Activated B cell treated with CpG ODN at 0.5 μM for 24 hours (primary cell): ENCODE measurements at regions of chrX and their contacts with region 1.

Region 1: DNA sequence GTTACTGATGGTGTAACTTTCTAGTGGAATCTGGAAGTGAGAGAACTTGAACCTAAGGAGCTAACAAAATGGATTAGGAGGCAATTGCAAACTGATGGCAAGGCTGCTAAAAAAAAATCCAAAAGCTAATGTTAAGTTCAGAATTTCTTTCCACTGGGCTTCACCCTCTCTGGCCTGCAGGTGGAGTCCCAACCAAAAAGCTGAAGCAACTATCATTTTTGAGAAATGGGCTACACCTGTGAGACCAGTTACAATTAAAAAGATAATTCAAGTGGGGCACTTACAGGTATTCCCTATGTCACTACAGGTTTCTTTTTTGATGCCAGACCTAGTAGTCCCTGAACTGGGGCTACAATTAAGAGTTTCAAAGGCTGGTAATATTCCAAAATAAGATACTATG is 142.1 kb upstream of the FTHL17 start:
- DNase-seq: no peak
- ATAC-seq: peak; percentile 52
- H3K4me3 Mint-ChIP-seq: no peak overlapping the region
- H3K27ac Mint-ChIP-seq: no peak overlapping the region
- H3K4me1 Mint-ChIP-seq: peaks cover 8% of the 10 kb centered on the region
- H3K27me3 Mint-ChIP-seq: no peaks in the 10 kb centered on the region
- CTCF ChIP-seq: no peak

Region 2: DNA sequence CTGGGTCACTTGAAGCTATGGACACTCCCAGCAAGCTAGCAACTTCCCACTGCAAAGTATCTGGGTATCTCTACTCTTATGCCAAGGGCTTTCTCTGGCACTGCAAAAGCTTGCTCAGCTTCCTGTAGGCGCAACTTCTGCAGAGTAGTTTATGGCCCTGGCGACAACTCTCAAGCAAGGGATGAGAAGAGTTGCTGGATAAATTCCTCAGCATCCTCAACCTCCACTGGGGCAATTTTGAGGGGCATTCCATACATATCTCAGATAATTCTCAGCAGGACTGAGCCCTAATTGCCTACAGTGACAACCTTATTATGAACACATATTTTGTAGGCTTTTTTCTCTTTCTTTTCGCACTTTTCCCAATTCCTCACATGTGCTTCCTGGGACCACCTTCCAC is 293.7 kb before region 1 on chrX:
- CTCF ChIA-PET with region 1: no interaction called
- POLR2A ChIA-PET with region 1: no interaction called
- intact Hi-C with region 1: no loop called
- DNase-seq: no peak
- ATAC-seq: no peak
- H3K4me3 Mint-ChIP-seq: no peak overlapping the region
- H3K27ac Mint-ChIP-seq: no peak overlapping the region
- H3K4me1 Mint-ChIP-seq: no peaks in the 10 kb centered on the region
- H3K27me3 Mint-ChIP-seq: no peaks in the 10 kb centered on the region
- CTCF ChIP-seq: no peak

Region 3: DNA sequence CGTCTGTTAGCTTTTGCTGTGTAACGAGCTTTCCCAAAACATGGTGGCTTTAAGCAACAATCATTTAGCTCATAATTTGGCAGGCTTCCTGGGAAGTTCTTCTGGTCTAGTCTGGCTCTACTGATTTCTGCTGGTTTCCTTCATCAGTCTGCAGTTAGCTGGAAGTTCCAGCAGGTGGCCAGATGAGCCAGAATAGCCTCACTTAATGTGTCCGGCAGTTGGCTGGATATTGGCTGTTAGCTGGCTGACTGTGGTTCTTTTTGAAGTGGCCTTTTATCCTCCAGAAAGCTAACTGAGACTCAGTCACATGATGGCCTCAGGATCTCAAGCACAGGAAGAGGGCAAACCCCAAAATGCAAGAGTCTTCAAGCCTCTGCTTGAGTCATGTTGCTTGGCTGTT is 177.0 kb before region 1 on chrX:
- CTCF ChIA-PET with region 1: interaction called, 86 read pairs
- POLR2A ChIA-PET with region 1: no interaction called
- intact Hi-C with region 1: loop called (anchors 1 kb)
- DNase-seq: no peak
- ATAC-seq: peak; percentile 42
- H3K4me3 Mint-ChIP-seq: no peak overlapping the region
- H3K27ac Mint-ChIP-seq: no peak overlapping the region
- H3K4me1 Mint-ChIP-seq: peaks cover 2% of the 10 kb centered on the region
- H3K27me3 Mint-ChIP-seq: no peaks in the 10 kb centered on the region
- CTCF ChIP-seq: no peak

Region 4: GRCh38 chrX:31237189-31237588 is 23.2 kb after region 1 on chrX:
- CTCF ChIA-PET with region 1: interaction called, 4 read pairs
- POLR2A ChIA-PET with region 1: interaction called, 5 read pairs
- intact Hi-C with region 1: loop called (anchors 2 kb)
- DNase-seq: no peak
- ATAC-seq: peak; percentile 48
- H3K4me3 Mint-ChIP-seq: no peak overlapping the region
- H3K27ac Mint-ChIP-seq: peak overlapping the region; percentile 41
- H3K4me1 Mint-ChIP-seq: peaks cover 64% of the 10 kb centered on the region
- H3K27me3 Mint-ChIP-seq: no peaks in the 10 kb centered on the region
- CTCF ChIP-seq: no peak

Region 5: GRCh38 chrX:31251336-31251735 is 37.4 kb after region 1 on chrX:
- CTCF ChIA-PET with region 1: no interaction called
- POLR2A ChIA-PET with region 1: no interaction called
- intact Hi-C with region 1: no loop called
- DNase-seq: no peak
- ATAC-seq: no peak
- H3K4me3 Mint-ChIP-seq: no peak overlapping the region
- H3K27ac Mint-ChIP-seq: no peak overlapping the region
- H3K4me1 Mint-ChIP-seq: no peaks in the 10 kb centered on the region
- H3K27me3 Mint-ChIP-seq: no peaks in the 10 kb centered on the region
- CTCF ChIP-seq: no peak

Region 6: DNA sequence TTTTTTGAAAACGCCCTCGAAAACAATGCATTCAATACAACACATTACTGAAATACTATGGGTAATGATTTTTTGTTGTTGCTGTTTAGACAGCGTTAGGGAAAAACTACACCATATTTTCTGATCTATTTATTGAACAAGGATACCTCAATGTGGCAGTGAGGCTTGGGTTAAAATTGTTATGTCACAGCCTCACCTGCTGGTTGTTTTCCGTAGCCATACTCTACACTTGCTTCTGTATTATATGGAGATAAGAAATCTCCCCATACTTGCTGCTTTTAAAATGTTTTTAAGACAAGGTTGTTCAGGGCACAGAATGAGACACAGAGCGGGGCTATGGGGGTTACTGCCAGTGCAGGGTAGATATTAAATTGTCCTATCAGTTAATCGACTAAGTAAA is 79.5 kb after region 1 on chrX:
- CTCF ChIA-PET with region 1: interaction called, 56 read pairs
- POLR2A ChIA-PET with region 1: no interaction called
- intact Hi-C with region 1: loop called (anchors 1 kb)
- DNase-seq: no peak
- ATAC-seq: peak; percentile 58
- H3K4me3 Mint-ChIP-seq: no peak overlapping the region
- H3K27ac Mint-ChIP-seq: no peak overlapping the region
- H3K4me1 Mint-ChIP-seq: no peaks in the 10 kb centered on the region
- H3K27me3 Mint-ChIP-seq: no peaks in the 10 kb centered on the region
- CTCF ChIP-seq: no peak

Region 7: DNA sequence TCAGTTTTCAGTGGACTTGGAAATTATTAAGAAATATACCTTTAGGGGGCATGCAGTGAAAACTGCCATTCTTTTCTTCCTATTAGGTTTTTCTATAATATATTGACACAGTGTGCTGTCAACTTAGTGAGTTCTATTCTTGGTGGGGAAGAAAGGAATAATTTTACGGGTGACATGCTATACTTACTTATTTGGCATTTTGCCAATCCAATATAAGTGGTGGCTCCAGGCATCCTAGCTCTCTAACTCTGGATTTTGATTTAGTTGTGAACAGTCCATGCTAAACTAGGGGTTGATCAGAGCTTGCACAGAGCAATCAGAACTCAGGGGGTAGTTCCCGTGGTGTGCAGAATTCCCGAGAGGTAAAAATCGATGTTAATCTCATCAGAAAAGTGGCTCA is 135.6 kb after region 1 on chrX:
- CTCF ChIA-PET with region 1: no interaction called
- POLR2A ChIA-PET with region 1: no interaction called
- intact Hi-C with region 1: no loop called
- DNase-seq: no peak
- ATAC-seq: no peak
- H3K4me3 Mint-ChIP-seq: no peak overlapping the region
- H3K27ac Mint-ChIP-seq: no peak overlapping the region
- H3K4me1 Mint-ChIP-seq: no peaks in the 10 kb centered on the region
- H3K27me3 Mint-ChIP-seq: no peaks in the 10 kb centered on the region
- CTCF ChIP-seq: no peak

Region 8: DNA sequence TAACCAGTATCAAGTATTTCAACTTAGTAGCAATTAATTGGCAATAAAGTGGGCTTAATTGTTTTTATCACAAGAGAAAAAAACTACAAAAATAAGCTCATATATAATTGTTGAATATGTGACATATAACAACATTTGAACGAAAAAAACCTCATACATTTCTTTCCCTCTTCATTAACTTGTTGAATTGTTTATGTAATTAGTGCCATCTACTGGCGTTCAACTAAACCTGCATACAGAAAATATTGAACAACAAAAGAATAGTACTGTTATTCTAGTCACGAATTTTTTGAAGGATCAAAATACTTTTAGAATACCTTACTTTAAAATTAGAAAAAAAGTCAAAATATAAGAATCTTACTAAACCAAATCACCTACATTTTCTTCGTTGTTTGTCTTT is 444.4 kb after region 1 on chrX:
- CTCF ChIA-PET with region 1: interaction called, 4 read pairs
- POLR2A ChIA-PET with region 1: no interaction called
- intact Hi-C with region 1: loop called (anchors 1 kb)
- DNase-seq: no peak
- ATAC-seq: no peak
- H3K4me3 Mint-ChIP-seq: no peak overlapping the region
- H3K27ac Mint-ChIP-seq: no peak overlapping the region
- H3K4me1 Mint-ChIP-seq: no peaks in the 10 kb centered on the region
- H3K27me3 Mint-ChIP-seq: no peaks in the 10 kb centered on the region
- CTCF ChIP-seq: no peak